Ascending aorta (tissue), 2 donors: ENCODE measurements at regions of chr11 and their contacts with region 1.

Region 1: GRCh38 chr11:447923-448731 is 2.0 kb upstream of the PTDSS2 start:
- DNase-seq: peak; percentile 69 to 97
- H3K4me3 ChIP-seq: peak overlapping the region; percentile 64 to 65
- H3K27ac ChIP-seq: peak overlapping the region; percentile 84 to 85
- H3K4me1 ChIP-seq: peaks cover 7 to 20% of the 10 kb centered on the region in 2 donors
- H3K27me3 ChIP-seq: no peaks in the 10 kb centered on the region
- CTCF ChIP-seq: peak; percentile 82 to 90 (median 83)

Region 2: GRCh38 chr11:207208-207862 is 240.8 kb before region 1 on chr11 and contains the starts of genes BET1L and RIC8A:
- intact Hi-C with region 1: loop called (anchors 5 kb)
- DNase-seq: peak; percentile 95 to 99
- H3K4me3 ChIP-seq: peak within 1 kb of the TSS; percentile 88 to 99
- H3K27ac ChIP-seq: peak within 1 kb of the TSS; percentile 99
- H3K4me1 ChIP-seq: peaks cover 17 to 47% of the 10 kb centered on the region in 2 donors
- H3K27me3 ChIP-seq: no peaks in the 10 kb centered on the region
- CTCF ChIP-seq: no peak
- total RNA-seq, gene BET1L: 42.3 TPM
- total RNA-seq, gene RIC8A: 102 TPM

Region 3: GRCh38 chr11:304915-305843 is 142.9 kb before region 1 on chr11:
- intact Hi-C with region 1: loop called (anchors 5 kb)
- DNase-seq: peak in 1 of 2 donors; percentile 85
- H3K4me3 ChIP-seq: no peak overlapping the region
- H3K27ac ChIP-seq: peak overlapping the region in 1 of 2 donors; percentile 86
- H3K4me1 ChIP-seq: peaks cover 7 to 35% of the 10 kb centered on the region in 2 donors
- H3K27me3 ChIP-seq: no peaks in the 10 kb centered on the region
- CTCF ChIP-seq: peak; percentile 58 to 65 (median 64)

Region 4: DNA sequence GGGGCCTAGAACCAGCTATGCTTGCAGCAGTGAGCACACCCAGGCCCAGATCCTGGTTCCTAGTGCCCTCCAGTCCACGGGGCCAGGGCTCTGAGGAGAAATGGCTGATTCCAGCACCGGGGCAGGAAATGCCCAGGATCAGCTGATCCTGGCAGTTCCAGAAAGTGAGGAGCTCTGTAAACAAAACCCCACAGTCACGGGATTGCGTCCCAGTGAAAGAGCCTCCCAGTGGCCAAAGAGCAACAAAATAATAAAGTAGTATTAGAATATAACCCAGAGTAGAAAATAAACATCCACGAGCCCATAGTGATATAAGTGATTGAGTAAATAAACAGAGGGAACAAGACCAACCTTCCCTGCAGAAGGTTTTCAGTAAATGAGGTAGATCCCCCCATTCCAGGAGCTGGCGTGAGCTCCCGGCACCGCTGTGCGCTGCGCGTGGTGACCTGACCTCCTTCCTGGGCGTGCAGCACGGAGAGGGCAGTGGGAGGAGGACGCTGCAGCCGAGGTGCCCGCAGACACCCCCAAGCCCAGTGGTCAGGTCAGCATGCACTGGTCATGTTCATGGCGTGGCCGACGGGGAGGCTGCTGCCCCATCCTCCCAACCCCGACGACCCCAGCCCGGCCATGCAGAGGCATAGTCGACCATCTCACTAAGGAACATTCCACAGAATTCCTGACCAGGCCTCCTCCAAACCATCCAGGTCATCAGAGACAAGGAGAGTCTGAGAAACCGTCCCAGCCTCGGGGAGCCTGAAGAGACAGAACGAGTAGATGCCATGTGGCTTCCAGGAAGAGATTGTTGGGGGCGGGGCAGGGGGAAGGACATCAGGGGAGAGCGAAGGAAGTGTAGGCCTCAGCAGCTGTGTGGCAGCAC is 21.8 kb after region 1 on chr11:
- intact Hi-C with region 1: loop called (anchors 2 kb)
- DNase-seq: peak in 1 of 2 donors; percentile 80
- H3K4me3 ChIP-seq: peak overlapping the region; percentile 26 to 51
- H3K27ac ChIP-seq: peak overlapping the region; percentile 65 to 78
- H3K4me1 ChIP-seq: peaks cover 4 to 13% of the 10 kb centered on the region in 2 donors
- H3K27me3 ChIP-seq: no peaks in the 10 kb centered on the region
- CTCF ChIP-seq: peak in 2 of 3 experiments; percentile 13 to 17

Region 5: GRCh38 chr11:568306-569157 is 120.4 kb after region 1 on chr11:
- intact Hi-C with region 1: loop called (anchors 1 kb)
- DNase-seq: peak; percentile 83 to 97
- H3K4me3 ChIP-seq: peak overlapping the region; percentile 72 to 76
- H3K27ac ChIP-seq: peak overlapping the region; percentile 77 to 89
- H3K4me1 ChIP-seq: peaks cover 4 to 9% of the 10 kb centered on the region in 2 donors
- H3K27me3 ChIP-seq: no peaks in the 10 kb centered on the region
- CTCF ChIP-seq: no peak

Region 6: GRCh38 chr11:587978-588380 is 139.9 kb after region 1 on chr11:
- intact Hi-C with region 1: no loop called
- DNase-seq: peak; percentile 53 to 77
- H3K4me3 ChIP-seq: no peak overlapping the region
- H3K27ac ChIP-seq: peak overlapping the region in 1 of 2 donors; percentile 18
- H3K4me1 ChIP-seq: no peaks in the 10 kb centered on the region
- H3K27me3 ChIP-seq: no peaks in the 10 kb centered on the region
- CTCF ChIP-seq: no peak